GM12878 (cell line): ENCODE measurements at regions of chr4 and their contacts with region 1.

Region 1: GRCh38 chr4:37802068-37802666 is 24.3 kb upstream of the PGM2 start:
- DNase-seq: no peak
- ATAC-seq: no peak; the same call in 2 of the 3 replicates
- H3K4me3 ChIP-seq: no peak overlapping the region
- H3K27ac ChIP-seq: no peak overlapping the region
- H3K4me1 ChIP-seq: no peaks in the 10 kb centered on the region
- H3K27me3 ChIP-seq: no peaks in the 10 kb centered on the region; a peak in 1 of 4 replicates
- CTCF ChIP-seq: peak; percentile 12 to 41 (median 24); a peak in 4 of 6 replicates
- EP300 ChIP-seq: no peak
- POLR2A ChIP-seq: no peak
- RAD21 ChIP-seq: peak; percentile 44

Region 2: GRCh38 chr4:37597034-37597433 is 205.1 kb before region 1 on chr4:
- CTCF ChIA-PET with region 1: interaction called, 103 read pairs
- POLR2A ChIA-PET with region 1: no interaction called
- RAD21 ChIA-PET with region 1: interaction called, 57 read pairs
- SMC1A ChIA-PET with region 1: interaction called, 43 read pairs
- in situ Hi-C with region 1: loop called (anchors 5 kb)
- intact Hi-C with region 1: no loop called
- DNase-seq: no peak
- ATAC-seq: no peak
- H3K4me3 ChIP-seq: no peak overlapping the region
- H3K27ac ChIP-seq: no peak overlapping the region
- H3K4me1 ChIP-seq: no peaks in the 10 kb centered on the region
- H3K27me3 ChIP-seq: no peaks in the 10 kb centered on the region
- CTCF ChIP-seq: no peak
- EP300 ChIP-seq: no peak
- POLR2A ChIP-seq: no peak
- RAD21 ChIP-seq: no peak

Region 3: DNA sequence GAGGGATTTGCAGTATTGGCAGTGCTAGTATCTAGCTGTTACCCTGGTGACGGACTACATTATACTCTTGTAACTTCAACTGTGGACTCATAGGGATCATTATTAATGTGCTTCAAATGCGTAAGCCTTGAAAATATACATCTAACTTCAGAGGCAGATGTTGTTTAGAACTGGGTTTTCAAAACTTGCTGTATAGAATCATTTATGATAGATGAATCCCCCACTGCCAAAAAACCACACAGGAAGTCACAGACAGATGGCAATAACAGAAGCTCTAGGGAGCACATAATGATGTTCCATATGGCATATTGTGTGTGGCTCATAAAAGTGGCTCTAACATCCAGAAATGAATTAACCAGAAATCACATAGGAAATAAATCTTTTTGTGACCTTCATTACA is 53.7 kb before region 1 on chr4:
- CTCF ChIA-PET with region 1: no interaction called
- POLR2A ChIA-PET with region 1: no interaction called
- RAD21 ChIA-PET with region 1: no interaction called
- SMC1A ChIA-PET with region 1: no interaction called
- in situ Hi-C with region 1: no loop called
- intact Hi-C with region 1: no loop called
- DNase-seq: no peak
- ATAC-seq: no peak
- H3K4me3 ChIP-seq: no peak overlapping the region
- H3K27ac ChIP-seq: no peak overlapping the region
- H3K4me1 ChIP-seq: no peaks in the 10 kb centered on the region; the same call in 1 of the 2 replicates
- H3K27me3 ChIP-seq: no peaks in the 10 kb centered on the region
- CTCF ChIP-seq: no peak
- EP300 ChIP-seq: no peak
- POLR2A ChIP-seq: no peak
- RAD21 ChIP-seq: no peak

Region 4: GRCh38 chr4:37826295-37827029 is 24.3 kb after region 1 on chr4 and contains the start of gene PGM2:
- CTCF ChIA-PET with region 1: interaction called, 12 read pairs
- POLR2A ChIA-PET with region 1: no interaction called
- RAD21 ChIA-PET with region 1: interaction called, 3 read pairs
- SMC1A ChIA-PET with region 1: interaction called, 5 read pairs
- in situ Hi-C with region 1: no loop called
- intact Hi-C with region 1: no loop called
- DNase-seq: peak; percentile 45
- ATAC-seq: peak; percentile 98
- H3K4me3 ChIP-seq: peak within 1 kb of the TSS; percentile 79
- H3K27ac ChIP-seq: peak within 1 kb of the TSS; percentile 66
- H3K4me1 ChIP-seq: 0 out of 2 replicates have a peak, but pooled peaks cover 5% of the 10 kb centered on the region
- H3K27me3 ChIP-seq: no peaks in the 10 kb centered on the region
- CTCF ChIP-seq: 0 out of 6 replicates have a peak, but pooled peaks of 1 of the 3 experiments have one; percentile 7
- EP300 ChIP-seq: no peak
- POLR2A ChIP-seq: peak; percentile 100
- RAD21 ChIP-seq: 0 out of 2 replicates have a peak, but pooled peaks have one; percentile 5
- polyA plus RNA-seq, gene PGM2: 11.9 to 15.1 TPM

Region 5: DNA sequence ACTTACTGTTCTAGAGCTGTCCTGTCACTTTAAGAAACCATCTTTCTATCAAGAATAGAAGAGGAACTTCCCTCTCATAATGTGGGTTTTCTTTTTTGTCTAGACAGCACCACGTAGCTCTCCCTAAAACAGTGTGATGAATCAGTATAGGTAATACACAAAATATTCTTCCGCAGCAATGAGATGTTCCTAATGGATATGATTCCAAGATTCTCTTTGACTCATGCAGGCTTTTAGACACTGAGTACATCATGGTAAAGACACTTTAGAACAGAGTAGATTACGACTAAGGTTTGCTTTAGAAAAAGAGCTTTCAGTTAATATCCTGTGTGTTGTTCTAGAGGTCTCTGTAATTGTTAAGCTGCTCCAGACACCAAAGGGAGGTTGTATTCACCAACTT is 227.9 kb after region 1 on chr4:
- CTCF ChIA-PET with region 1: interaction called, 65 read pairs
- POLR2A ChIA-PET with region 1: no interaction called
- RAD21 ChIA-PET with region 1: interaction called, 24 read pairs
- SMC1A ChIA-PET with region 1: interaction called, 103 read pairs
- in situ Hi-C with region 1: loop called (anchors 5 kb)
- intact Hi-C with region 1: loop called (anchors 1 kb)
- DNase-seq: no peak
- ATAC-seq: no peak
- H3K4me3 ChIP-seq: no peak overlapping the region
- H3K27ac ChIP-seq: no peak overlapping the region
- H3K4me1 ChIP-seq: no peaks in the 10 kb centered on the region
- H3K27me3 ChIP-seq: no peaks in the 10 kb centered on the region
- CTCF ChIP-seq: no peak
- EP300 ChIP-seq: no peak
- POLR2A ChIP-seq: no peak
- RAD21 ChIP-seq: no peak

Region 6: DNA sequence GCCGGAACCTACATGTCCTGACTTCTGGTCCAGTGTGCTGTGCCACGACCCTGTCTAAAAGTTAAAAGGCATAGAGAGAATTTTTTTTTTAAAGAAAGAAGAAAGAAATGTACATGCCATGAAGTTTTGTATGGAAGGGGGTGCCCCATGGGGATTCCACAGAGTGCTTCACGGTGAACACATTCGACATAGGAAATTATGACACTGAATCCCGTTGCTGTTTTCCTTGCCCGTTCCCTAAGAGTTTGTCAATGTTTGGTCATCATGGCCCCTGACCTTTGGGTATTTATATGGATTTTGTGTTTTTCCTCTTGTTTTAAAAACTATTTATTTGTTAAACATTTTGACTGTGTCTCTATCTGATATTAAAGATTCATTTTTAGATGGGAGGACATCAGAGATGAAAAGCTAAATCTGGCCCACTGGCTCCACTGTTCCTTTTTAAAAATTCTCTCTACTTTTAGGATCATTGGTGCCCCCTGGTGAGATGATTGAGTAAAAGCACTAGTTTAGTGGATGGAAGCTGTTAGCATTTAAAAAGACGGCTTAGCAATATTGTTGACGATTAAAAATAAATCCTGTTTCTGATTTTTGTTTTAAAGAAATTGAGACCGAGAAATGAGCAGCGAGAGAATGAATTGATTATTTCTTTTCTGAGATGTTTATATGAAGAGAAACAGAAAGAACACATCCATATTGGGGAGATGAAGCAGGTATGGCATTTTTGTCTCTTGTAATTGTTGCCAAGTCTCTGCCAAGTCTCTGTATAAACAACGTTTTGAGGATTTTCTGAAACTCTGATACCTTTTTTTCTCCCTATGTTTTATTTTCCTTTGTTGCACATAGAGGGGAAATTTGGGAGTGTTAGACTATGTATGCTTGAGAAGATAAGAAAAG is 233.1 kb after region 1 on chr4:
- CTCF ChIA-PET with region 1: interaction called, 65 read pairs
- POLR2A ChIA-PET with region 1: no interaction called
- RAD21 ChIA-PET with region 1: interaction called, 24 read pairs
- SMC1A ChIA-PET with region 1: interaction called, 103 read pairs
- in situ Hi-C with region 1: loop called (anchors 5 kb)
- intact Hi-C with region 1: loop called (anchors 1 kb)
- DNase-seq: no peak
- ATAC-seq: peak; percentile 74
- H3K4me3 ChIP-seq: no peak overlapping the region
- H3K27ac ChIP-seq: no peak overlapping the region
- H3K4me1 ChIP-seq: no peaks in the 10 kb centered on the region
- H3K27me3 ChIP-seq: no peaks in the 10 kb centered on the region
- CTCF ChIP-seq: peak; percentile 44 to 75 (median 64); a peak in 5 of 6 replicates
- EP300 ChIP-seq: no peak
- POLR2A ChIP-seq: no peak
- RAD21 ChIP-seq: peak; percentile 89

Region 7: GRCh38 chr4:38119668-38120385 is 317.7 kb after region 1 on chr4:
- CTCF ChIA-PET with region 1: no interaction called
- POLR2A ChIA-PET with region 1: no interaction called
- RAD21 ChIA-PET with region 1: no interaction called
- SMC1A ChIA-PET with region 1: no interaction called
- in situ Hi-C with region 1: no loop called
- intact Hi-C with region 1: no loop called
- DNase-seq: no peak
- ATAC-seq: peak; percentile 47; the same call in 2 of the 3 replicates
- H3K4me3 ChIP-seq: no peak overlapping the region
- H3K27ac ChIP-seq: no peak overlapping the region
- H3K4me1 ChIP-seq: peaks cover 19% of the 10 kb centered on the region
- H3K27me3 ChIP-seq: no peaks in the 10 kb centered on the region
- CTCF ChIP-seq: no peak
- EP300 ChIP-seq: no peak
- POLR2A ChIP-seq: no peak
- RAD21 ChIP-seq: no peak

Region 8: DNA sequence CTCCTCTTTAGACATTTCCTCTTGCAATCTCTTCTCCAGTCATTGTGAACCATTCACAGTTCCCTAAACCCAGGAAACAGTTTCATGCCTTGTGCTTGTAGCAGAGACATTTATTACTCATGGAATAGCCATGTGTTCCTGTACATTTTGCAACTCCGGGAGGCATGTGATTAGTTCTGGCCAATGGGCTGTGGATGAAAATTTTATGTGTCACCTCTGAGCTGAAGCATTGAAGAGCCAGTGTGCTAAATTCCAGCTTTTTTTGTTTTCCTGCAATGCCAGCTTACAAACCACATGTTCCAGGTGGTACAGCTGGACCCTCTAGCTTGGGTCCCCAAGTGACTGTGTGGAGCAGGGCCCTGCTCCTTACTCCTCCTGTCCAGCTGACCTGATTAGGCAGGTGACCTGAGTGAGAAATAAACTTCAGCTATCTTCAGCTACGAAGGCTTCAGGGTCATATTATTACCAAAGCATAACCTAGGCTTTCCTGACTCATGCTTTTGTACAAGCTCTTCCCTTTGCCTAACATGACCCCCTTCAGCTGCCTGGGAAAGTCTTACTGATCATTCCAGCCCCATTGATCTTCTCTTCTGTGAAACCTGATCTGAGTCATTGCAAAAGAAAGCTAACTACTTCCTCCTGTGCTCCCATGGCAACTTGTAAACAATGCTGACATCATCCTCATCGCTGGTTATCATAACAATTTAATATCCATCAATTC is 358.5 kb after region 1 on chr4:
- CTCF ChIA-PET with region 1: no interaction called
- POLR2A ChIA-PET with region 1: no interaction called
- RAD21 ChIA-PET with region 1: no interaction called
- SMC1A ChIA-PET with region 1: no interaction called
- in situ Hi-C with region 1: no loop called
- intact Hi-C with region 1: loop called (anchors 10 kb)
- DNase-seq: peak; percentile 69
- ATAC-seq: peak; percentile 91
- H3K4me3 ChIP-seq: no peak overlapping the region
- H3K27ac ChIP-seq: peak overlapping the region; percentile 57
- H3K4me1 ChIP-seq: peaks cover 10% of the 10 kb centered on the region
- H3K27me3 ChIP-seq: no peaks in the 10 kb centered on the region
- CTCF ChIP-seq: no peak
- EP300 ChIP-seq: peak; percentile 87 to 96; a peak in 3 of 4 replicates
- POLR2A ChIP-seq: no peak
- RAD21 ChIP-seq: peak; percentile 16; the same call in 1 of the 2 replicates